Psoas muscle (tissue), 8 donors: ENCODE measurements at regions of chr5 and their contacts with region 1.

Region 1: DNA sequence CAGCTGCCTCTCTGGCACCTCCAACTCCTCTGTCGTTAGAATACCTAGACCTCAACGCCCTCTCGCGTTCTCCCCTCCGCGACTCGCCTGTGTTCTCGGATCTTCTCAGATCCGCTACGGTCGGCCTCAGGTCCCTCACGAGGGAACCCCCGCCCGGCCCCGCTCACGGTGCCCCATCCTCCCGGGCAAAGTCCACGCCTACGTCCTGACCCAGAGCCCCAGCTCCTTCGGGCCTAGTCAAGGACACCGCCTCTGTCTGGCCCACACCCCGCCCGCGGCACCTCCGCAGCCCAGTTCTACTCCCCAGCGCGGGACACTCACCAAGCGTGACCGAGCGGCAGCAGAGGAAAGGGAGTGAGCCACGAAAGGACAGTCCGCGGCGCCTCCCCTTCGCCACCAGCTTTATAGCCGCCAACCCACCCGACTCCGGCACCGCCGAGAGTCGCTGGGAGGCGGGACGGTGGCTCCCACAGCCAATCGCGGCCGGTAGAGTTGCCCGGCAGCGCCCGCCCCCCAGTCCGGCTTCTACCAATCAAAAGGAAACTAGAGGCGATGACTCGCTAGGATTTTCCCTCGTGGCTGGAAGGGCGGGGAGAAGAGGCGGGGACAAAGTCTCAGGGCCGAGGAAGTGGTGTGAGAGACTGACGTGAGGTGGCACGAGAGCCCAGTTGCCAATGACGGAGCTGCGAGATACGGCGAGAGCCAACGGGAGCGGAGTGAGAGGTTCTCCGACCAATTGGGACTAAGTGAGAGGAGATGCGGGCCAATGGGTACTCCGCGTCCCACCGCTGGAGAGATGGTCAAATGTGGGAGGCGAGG is at the start of gene HMGCS1:
- DNase-seq: peak; percentile 98 to 99
- ATAC-seq: peak; percentile 98 to 99 (median 98)
- H3K4me3 ChIP-seq: peak within 1 kb of the TSS; percentile 96
- H3K27ac ChIP-seq: peak within 1 kb of the TSS; percentile 91
- H3K4me1 ChIP-seq: peaks cover 11% of the 10 kb centered on the region
- H3K27me3 ChIP-seq: no peaks in the 10 kb centered on the region
- CTCF ChIP-seq: no peak
- total RNA-seq, gene HMGCS1: 14.7 to 22.6 (median 17.9) TPM

Region 2: GRCh38 chr5:43120720-43121564 is 192.3 kb before region 1 on chr5 and contains the start of gene ZNF131:
- intact Hi-C with region 1: loop called in 1 of 2 experiments (anchors 5 kb)
- DNase-seq: peak; percentile 97 to 98
- ATAC-seq: peak; percentile 94 to 98 (median 94)
- H3K4me3 ChIP-seq: peak within 1 kb of the TSS; percentile 85
- H3K27ac ChIP-seq: peak within 1 kb of the TSS; percentile 99
- H3K4me1 ChIP-seq: peaks cover 47% of the 10 kb centered on the region
- H3K27me3 ChIP-seq: no peaks in the 10 kb centered on the region
- CTCF ChIP-seq: no peak
- total RNA-seq, gene ZNF131: 16.7 to 23.7 (median 18.7) TPM